GM12878 (cell line): ENCODE measurements at regions of chr9 and their contacts with region 1.

Region 1: DNA sequence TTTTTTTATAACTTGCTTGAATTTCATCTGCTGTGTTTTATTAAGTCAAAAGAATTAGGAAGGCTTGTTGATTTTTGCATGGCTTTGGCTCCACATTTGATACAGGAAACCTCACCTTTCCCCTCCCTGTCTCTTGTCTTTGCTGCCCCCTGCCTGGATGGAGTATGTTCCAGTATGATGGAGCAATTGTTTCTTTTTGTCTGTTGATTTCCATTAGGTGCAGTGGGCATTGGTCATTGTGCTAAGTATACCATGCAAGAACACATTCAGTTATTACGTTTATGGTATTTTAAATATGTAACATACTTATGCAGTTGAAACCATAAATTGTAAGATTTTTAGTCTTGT is 19.6 kb downstream of the TJP2 start:
- DNase-seq: no peak
- ATAC-seq: no peak
- H3K4me3 ChIP-seq: no peak overlapping the region
- H3K27ac ChIP-seq: no peak overlapping the region
- H3K4me1 ChIP-seq: peaks cover 15% of the 10 kb centered on the region
- H3K27me3 ChIP-seq: no peaks in the 10 kb centered on the region
- CTCF ChIP-seq: peak in 1 of 3 experiments; percentile 37; a peak in 1 of 6 replicates
- EP300 ChIP-seq: no peak
- POLR2A ChIP-seq: no peak
- RAD21 ChIP-seq: peak; percentile 28; the same call in 1 of the 2 replicates

Region 2: DNA sequence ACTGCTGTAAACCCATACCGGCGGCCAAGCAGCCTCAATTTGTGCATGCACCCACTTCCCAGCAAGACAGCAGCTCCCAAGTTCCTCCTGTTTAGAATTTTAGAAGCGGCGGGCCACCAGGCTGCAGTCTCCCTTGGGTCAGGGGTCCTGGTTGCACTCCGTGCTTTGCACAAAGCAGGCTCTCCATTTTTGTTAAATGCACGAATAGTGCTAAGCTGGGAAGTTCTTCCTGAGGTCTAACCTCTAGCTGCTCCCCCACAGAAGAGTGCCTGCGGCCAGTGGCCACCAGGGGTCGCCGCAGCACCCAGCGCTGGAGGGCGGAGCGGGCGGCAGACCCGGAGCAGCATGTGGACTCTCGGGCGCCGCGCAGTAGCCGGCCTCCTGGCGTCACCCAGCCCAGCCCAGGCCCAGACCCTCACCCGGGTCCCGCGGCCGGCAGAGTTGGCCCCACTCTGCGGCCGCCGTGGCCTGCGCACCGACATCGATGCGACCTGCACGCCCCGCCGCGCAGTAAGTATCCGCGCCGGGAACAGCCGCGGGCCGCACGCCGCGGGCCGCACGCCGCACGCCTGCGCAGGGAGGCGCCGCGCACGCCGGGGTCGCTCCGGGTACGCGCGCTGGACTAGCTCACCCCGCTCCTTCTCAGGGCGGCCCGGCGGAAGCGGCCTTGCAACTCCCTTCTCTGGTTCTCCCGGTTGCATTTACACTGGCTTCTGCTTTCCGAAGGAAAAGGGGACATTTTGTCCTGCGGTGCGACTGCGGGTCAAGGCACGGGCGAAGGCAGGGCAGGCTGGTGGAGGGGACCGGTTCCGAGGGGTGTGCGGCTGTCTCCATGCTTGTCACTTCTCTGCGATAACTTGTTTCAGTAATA is 158.0 kb before region 1 on chr9 and contains the start of gene FXN:
- CTCF ChIA-PET with region 1: interaction called, 58 read pairs
- POLR2A ChIA-PET with region 1: no interaction called
- RAD21 ChIA-PET with region 1: interaction called, 19 read pairs
- SMC1A ChIA-PET with region 1: interaction called, 10 read pairs
- in situ Hi-C with region 1: no loop called
- intact Hi-C with region 1: loop called (anchors 1 kb)
- DNase-seq: peak; percentile 38
- ATAC-seq: peak; percentile 98
- H3K4me3 ChIP-seq: peak within 1 kb of the TSS; percentile 96
- H3K27ac ChIP-seq: peak within 1 kb of the TSS; percentile 72
- H3K4me1 ChIP-seq: peaks cover 6% of the 10 kb centered on the region
- H3K27me3 ChIP-seq: no peaks in the 10 kb centered on the region
- CTCF ChIP-seq: peak; percentile 96 to 98 (median 98)
- EP300 ChIP-seq: no peak
- POLR2A ChIP-seq: peak; percentile 84
- RAD21 ChIP-seq: peak; percentile 67
- polyA plus RNA-seq, gene FXN: 21.0 to 22.3 TPM

Region 3: GRCh38 chr9:69121828-69122548 is 71.7 kb before region 1 on chr9:
- CTCF ChIA-PET with region 1: interaction called, 5 read pairs
- POLR2A ChIA-PET with region 1: no interaction called
- RAD21 ChIA-PET with region 1: interaction called, 10 read pairs
- SMC1A ChIA-PET with region 1: interaction called, 4 read pairs
- in situ Hi-C with region 1: no loop called
- intact Hi-C with region 1: loop called (anchors 5 kb)
- DNase-seq: no peak
- ATAC-seq: peak; percentile 79
- H3K4me3 ChIP-seq: peak overlapping the region; percentile 88
- H3K27ac ChIP-seq: no peak overlapping the region
- H3K4me1 ChIP-seq: no peaks in the 10 kb centered on the region
- H3K27me3 ChIP-seq: peaks cover 0 to 3% of the 10 kb centered on the region in 2 experiments; a peak in 1 of 4 replicates
- CTCF ChIP-seq: peak in 2 of 3 experiments; percentile 1 to 24; a peak in 1 of 6 replicates
- EP300 ChIP-seq: no peak
- POLR2A ChIP-seq: no peak
- RAD21 ChIP-seq: peak; percentile 31; the same call in 1 of the 2 replicates

Region 4: GRCh38 chr9:69168709-69169217 is 24.9 kb before region 1 on chr9:
- CTCF ChIA-PET with region 1: interaction called, 134 read pairs
- POLR2A ChIA-PET with region 1: interaction called, 7 read pairs
- RAD21 ChIA-PET with region 1: interaction called, 8 read pairs
- SMC1A ChIA-PET with region 1: interaction called, 22 read pairs
- in situ Hi-C with region 1: no loop called
- intact Hi-C with region 1: no loop called
- DNase-seq: no peak
- ATAC-seq: peak; percentile 75
- H3K4me3 ChIP-seq: peak overlapping the region; percentile 61
- H3K27ac ChIP-seq: no peak overlapping the region; the same call in 1 of the 2 replicates
- H3K4me1 ChIP-seq: peaks cover 5% of the 10 kb centered on the region
- H3K27me3 ChIP-seq: no peaks in the 10 kb centered on the region
- CTCF ChIP-seq: no peak
- EP300 ChIP-seq: 0 out of 4 replicates have a peak, but pooled peaks of 1 of the 2 experiments have one; percentile 20
- POLR2A ChIP-seq: no peak
- RAD21 ChIP-seq: no peak

Region 5: DNA sequence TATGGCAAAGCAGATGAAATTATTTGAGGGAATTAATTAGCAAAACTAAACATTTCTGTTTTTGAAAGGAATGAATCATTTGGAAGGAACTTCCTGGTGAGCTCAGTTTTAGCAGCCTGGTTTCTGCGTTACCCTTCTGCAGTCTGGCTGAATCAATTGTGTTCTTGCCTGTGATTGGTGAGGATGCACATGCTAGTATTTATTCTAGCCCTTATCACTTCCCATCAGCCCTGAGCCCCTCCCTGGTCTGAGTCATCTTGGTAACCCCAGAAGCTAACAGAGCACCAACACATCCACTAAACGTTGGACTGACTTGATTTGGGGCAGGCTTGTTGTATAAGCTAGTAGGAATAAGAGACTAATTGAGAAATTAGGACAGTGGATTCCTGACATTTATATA is 13.0 kb before region 1 on chr9:
- CTCF ChIA-PET with region 1: interaction called, 134 read pairs
- POLR2A ChIA-PET with region 1: interaction called, 8 read pairs
- RAD21 ChIA-PET with region 1: interaction called, 8 read pairs
- SMC1A ChIA-PET with region 1: interaction called, 45 read pairs
- in situ Hi-C with region 1: no loop called
- intact Hi-C with region 1: loop called (anchors 2 kb)
- DNase-seq: no peak
- ATAC-seq: peak; percentile 51
- H3K4me3 ChIP-seq: no peak overlapping the region
- H3K27ac ChIP-seq: no peak overlapping the region
- H3K4me1 ChIP-seq: peaks cover 18% of the 10 kb centered on the region
- H3K27me3 ChIP-seq: no peaks in the 10 kb centered on the region
- CTCF ChIP-seq: no peak
- EP300 ChIP-seq: no peak
- POLR2A ChIP-seq: no peak
- RAD21 ChIP-seq: no peak